Activated CD4-positive, alpha-beta memory T cell treated with anti-CD3 and anti-CD28 coated beads, Interleukin-2, amount 10 ng/mL, durations not matched to agents 7 days and 5 days (primary cell): ENCODE measurements at regions of chr3 and their contacts with region 1.

Region 1: DNA sequence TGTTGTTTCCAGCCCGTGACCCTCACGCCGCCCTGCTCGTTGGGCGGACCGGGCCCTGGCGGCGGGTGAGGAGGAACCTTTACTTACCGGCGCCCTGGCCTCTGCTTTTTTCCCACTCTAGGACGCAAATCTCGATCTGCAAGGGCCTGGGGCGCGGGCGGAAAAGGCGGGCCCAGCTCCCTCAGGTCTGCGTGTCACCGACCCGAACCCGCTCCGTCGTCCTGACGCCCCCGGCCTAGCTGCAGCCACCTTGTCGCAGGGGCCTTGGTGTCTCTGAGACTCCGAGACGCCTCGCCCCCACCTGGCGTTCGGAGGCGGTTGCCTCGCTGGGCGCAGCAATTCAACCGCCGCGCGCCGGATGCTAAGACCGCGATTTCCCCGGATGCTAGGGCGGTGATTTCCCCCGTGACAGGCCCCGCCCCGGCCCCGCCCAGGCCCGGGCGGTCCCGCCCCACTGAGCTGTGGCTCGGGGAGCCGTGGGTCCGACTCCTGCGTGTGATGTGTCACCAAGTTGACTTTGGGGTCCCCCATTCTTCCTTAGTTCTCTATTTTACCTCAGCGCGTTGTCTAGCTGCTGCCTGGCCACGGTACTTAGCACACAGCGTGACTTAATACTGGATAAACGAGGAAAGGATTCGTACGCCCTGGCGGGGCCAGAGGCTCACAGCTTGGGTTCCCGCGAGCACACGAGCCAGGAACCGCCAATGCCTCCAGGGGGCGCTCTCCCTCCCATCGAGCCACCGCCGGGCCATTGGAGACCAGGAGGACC is at the start of gene RPL39L:
- DNase-seq: peak; percentile 95
- H3K4me3 Mint-ChIP-seq: peak within 1 kb of the TSS; percentile 86
- H3K27ac Mint-ChIP-seq: peak within 1 kb of the TSS; percentile 90
- H3K4me1 Mint-ChIP-seq: peaks cover 35% of the 10 kb centered on the region
- H3K27me3 Mint-ChIP-seq: peaks cover 4% of the 10 kb centered on the region
- total RNA-seq, gene RPL39L: 23.0 to 23.1 TPM

Region 2: GRCh38 chr3:187025656-187026316 is 113.5 kb before region 1 on chr3:
- CTCF ChIA-PET with region 1: interaction called, 12 read pairs
- POLR2A ChIA-PET with region 1: interaction called, 29 read pairs
- DNase-seq: peak; percentile 47
- H3K4me3 Mint-ChIP-seq: peak overlapping the region; percentile 73
- H3K27ac Mint-ChIP-seq: peak overlapping the region; percentile 88
- H3K4me1 Mint-ChIP-seq: peaks cover 72% of the 10 kb centered on the region
- H3K27me3 Mint-ChIP-seq: no peaks in the 10 kb centered on the region

Region 3: DNA sequence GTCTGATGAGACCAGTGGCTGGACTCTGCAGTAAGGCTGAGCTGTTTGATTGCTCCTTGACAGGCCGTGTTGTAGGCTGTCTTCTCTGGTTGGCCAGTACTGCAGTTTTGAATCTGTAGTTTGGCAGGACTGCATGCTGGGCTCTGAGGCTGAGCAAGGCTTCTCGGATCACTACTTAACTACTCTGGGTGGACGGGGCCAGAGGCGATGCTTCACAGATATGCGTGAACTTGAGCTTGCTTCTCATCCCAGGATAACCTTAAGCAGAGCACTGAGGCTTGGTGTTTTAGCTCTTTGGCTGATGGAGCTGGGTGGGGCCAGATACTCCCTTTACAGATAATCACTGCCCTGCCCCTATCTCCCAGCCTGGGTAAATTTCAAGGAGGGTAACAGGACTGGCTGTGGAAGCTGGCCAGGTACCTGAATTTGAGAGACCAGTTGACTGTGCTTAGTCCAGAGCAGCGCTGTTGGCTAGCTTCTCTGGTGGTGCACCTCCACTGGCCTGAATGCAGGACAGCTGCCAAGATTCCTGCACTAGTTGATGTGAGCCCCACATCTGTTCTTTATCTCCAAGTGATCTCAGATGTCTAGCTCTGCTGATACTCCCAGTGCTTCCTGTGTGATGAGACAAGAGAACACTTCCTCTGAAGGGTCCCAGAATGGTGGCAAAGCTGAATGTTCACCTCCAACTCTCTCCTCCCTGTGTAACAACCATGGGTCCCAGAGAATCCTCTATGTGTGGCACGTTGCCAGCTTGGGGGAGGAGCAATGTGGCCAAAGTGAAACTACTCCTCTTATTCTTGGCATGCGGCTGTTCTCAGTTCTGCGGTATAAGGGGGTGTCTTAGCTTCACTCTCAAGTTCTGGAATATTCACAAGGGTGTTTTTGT is 37.9 kb before region 1 on chr3:
- CTCF ChIA-PET with region 1: interaction called, 28 read pairs
- POLR2A ChIA-PET with region 1: interaction called, 8 read pairs
- DNase-seq: peak; percentile 64
- H3K4me3 Mint-ChIP-seq: peak overlapping the region; percentile 56
- H3K27ac Mint-ChIP-seq: peak overlapping the region; percentile 44
- H3K4me1 Mint-ChIP-seq: peaks cover 56% of the 10 kb centered on the region
- H3K27me3 Mint-ChIP-seq: peaks cover 6% of the 10 kb centered on the region

Region 4: DNA sequence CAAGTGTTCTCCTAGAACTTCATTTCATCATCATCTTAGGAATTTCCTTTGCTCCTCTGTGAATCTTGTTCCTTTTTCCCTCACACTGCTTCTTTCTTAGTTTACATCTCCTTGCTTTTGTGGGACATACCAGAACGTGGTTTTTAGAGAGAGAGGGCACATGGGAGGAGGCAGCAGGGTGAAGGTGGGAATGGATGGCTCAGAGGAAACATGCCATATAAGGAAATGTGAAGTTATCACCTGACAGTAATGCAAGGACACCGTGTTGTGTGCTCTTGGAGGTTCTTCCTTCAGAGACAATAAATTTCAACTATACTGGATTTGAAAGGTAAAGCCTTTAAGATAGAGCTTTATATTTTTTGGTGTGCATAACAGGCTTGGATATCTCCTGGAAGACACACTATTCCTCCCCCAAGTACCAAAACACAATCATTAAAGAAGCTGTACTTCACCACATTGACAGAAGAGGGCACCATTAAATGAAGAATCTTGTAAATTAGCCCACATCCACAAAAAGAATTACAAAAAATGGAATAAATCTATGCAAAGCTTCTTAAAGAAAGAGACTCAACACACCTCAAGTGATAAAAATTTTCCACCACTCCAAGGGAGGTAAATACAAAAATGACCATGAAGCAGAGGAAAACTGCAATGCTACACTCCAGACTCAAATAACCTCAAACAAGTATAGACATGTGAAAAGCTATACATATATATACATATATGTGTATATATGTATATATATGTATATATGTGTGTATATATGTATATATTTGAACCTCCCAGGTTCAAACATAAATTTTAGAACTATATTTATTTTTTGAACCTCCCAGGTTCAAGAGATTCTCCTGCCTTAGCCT is 26.1 kb before region 1 on chr3:
- CTCF ChIA-PET with region 1: interaction called, 82 read pairs
- POLR2A ChIA-PET with region 1: interaction called, 15 read pairs
- DNase-seq: no peak
- H3K4me3 Mint-ChIP-seq: no peak overlapping the region
- H3K27ac Mint-ChIP-seq: no peak overlapping the region
- H3K4me1 Mint-ChIP-seq: peaks cover 7% of the 10 kb centered on the region
- H3K27me3 Mint-ChIP-seq: no peaks in the 10 kb centered on the region

Region 5: DNA sequence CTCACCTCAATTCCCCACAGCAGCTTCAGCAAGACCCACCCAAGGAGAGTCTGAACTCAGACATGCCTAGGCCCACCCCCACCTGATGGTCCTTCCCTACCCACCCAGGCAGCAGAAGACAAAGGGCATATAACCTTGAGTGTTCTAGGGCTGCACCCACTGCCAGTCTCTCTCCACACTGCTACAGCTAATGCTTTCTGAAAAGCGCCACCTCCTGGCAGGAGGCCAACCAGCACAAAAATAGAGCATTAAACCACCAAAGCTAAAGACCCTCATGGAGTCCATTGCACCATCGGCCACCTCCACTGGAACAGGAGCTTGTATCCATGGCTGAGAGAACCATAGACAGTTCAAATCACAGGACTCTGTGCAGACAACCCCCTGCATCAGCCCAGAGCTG is 11.3 kb after region 1 on chr3:
- CTCF ChIA-PET with region 1: interaction called, 83 read pairs
- POLR2A ChIA-PET with region 1: interaction called, 19 read pairs
- DNase-seq: peak; percentile 71
- H3K4me3 Mint-ChIP-seq: no peak overlapping the region
- H3K27ac Mint-ChIP-seq: no peak overlapping the region
- H3K4me1 Mint-ChIP-seq: peaks cover 2% of the 10 kb centered on the region
- H3K27me3 Mint-ChIP-seq: peaks cover 49% of the 10 kb centered on the region

Region 6: DNA sequence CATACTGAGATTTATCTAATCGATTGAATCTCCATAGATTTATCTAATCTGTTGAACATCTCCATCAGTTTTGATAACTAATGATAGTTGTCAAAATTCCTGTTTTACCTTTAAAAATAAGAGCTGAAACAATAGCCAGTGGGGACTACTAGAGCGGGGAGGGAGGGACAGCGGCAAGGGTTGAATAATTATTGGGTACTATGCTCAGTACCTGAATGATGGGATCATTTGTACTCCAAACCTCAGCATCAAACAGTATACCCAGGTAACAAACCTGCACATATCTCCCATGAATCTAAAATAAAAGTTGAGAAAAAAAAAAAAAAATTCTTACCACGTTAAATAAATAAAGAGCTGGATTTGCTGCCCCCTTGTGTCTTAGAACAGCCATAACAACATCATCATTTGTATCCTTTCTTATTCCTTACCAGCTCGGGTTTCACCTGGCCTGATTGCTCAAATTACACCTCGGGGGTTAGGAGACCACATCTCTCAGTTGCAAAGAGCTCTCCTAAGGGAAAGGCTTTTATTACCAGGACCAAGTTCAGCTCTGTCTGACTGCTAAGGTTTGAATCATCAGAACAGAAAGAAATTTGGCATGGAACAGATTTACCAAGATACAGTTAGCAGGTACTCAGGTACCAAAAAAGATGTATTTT is 25.7 kb after region 1 on chr3:
- CTCF ChIA-PET with region 1: interaction called, 59 read pairs
- POLR2A ChIA-PET with region 1: interaction called, 6 read pairs
- DNase-seq: peak; percentile 25
- H3K4me3 Mint-ChIP-seq: no peak overlapping the region
- H3K27ac Mint-ChIP-seq: no peak overlapping the region
- H3K4me1 Mint-ChIP-seq: peaks cover 4% of the 10 kb centered on the region
- H3K27me3 Mint-ChIP-seq: peaks cover 23% of the 10 kb centered on the region

Region 7: DNA sequence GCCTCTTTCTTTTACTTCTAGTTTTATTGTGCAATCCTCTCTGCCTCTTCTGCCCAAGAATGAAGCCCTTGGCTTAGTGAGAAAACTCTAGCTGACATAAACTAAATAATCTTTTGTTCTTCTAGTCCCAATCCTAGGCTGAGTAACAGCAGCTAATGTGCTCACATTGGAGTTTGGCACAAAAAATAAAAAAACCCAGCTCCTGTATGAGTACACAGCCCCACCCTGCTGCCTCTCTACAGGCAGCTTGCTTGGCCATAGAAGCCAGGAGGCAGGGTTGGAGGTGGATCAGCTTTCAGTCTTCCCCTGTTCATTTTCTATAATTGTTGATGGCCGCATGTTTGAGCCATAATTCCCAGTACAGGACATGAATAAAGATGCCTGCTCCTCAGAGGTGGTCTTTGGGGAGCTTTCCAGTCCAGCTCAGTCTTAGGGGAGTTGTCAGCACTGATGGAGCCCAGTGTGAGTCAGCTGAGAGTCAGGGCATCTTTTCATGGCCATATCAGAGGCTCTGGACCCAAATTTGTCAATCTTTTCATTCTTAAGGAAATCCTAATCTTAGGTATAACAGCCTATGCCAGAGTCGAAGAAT is 104.7 kb after region 1 on chr3:
- CTCF ChIA-PET with region 1: no interaction called
- POLR2A ChIA-PET with region 1: no interaction called
- DNase-seq: no peak
- H3K4me3 Mint-ChIP-seq: no peak overlapping the region
- H3K27ac Mint-ChIP-seq: no peak overlapping the region
- H3K4me1 Mint-ChIP-seq: peaks cover 9% of the 10 kb centered on the region
- H3K27me3 Mint-ChIP-seq: peaks cover 12% of the 10 kb centered on the region

Region 8: GRCh38 chr3:187291001-187291511 is 151.7 kb after region 1 on chr3:
- CTCF ChIA-PET with region 1: no interaction called
- POLR2A ChIA-PET with region 1: no interaction called
- DNase-seq: no peak
- H3K4me3 Mint-ChIP-seq: no peak overlapping the region
- H3K27ac Mint-ChIP-seq: no peak overlapping the region
- H3K4me1 Mint-ChIP-seq: no peaks in the 10 kb centered on the region
- H3K27me3 Mint-ChIP-seq: peaks cover 55% of the 10 kb centered on the region